ENCODE measurements at regions of chr22 and their contacts with region 1.

Region 1: DNA sequence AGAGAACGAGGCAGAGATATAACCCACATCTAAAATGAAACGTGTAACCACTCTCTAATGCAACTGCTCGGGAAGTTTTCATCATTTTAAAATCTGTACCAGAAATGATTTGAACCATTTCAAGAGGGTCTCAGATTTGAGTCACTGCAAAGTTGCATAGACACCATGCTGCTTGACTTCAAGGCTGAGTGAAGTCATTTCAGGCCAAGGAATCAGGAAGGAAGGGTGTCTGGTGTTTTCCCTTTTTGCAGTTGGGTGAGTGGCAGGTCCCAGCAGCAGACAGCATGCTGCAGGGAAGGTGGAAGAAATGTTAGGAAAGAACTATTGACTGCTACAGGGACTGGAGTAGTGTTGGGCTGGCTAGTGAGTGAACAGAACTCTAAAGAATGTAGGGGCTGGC is 16.5 kb downstream of the TANGO2 start:
- DNase-seq: peak; percentile 63
- H3K4me3 Mint-ChIP-seq: no peak overlapping the region
- H3K27ac Mint-ChIP-seq: peak overlapping the region; percentile 84
- H3K4me1 Mint-ChIP-seq: peaks cover 25% of the 10 kb centered on the region
- H3K27me3 Mint-ChIP-seq: no peaks in the 10 kb centered on the region

Region 2: DNA sequence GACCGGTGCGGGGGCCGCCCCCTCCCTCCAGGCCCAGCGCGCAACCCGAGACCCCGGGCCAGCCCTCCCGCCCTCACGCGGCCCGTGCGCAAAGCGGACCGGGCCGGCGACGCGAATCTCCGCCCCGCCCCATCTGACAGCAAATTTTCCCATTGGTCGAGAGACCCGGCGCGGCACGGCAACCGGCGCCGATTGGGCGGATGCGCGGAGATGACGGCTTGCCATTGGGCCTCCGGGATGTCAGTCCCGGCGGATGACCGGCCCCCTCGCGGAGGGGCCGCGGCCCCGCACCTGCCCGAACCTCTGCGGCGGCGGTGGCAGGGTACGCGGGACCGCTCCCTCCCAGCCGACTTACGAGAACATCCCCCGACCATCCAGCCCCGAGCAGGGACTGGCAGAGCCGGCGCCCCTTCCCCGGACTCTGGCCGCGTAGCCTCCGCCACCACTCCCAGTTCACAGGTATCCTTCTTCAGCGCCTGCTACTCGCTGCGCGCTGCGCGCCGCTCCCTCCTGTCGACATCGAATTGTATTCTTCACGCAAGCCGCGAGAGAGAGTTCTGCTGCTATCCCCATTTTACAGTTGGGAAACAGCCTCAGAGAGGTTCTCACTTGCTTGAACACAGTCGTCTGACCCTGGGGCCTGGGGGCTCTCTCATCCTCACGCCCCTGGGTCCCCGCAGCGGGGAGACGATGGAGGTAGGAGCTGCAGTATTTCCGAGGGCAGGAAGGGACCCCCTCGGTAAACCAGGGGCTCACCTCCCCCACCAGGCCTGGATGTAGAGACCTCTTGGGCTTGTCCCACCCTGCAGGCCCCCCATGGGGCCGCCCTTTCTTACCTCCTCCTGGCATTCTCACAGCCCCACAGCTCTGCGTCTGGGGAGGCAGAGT is 20.4 kb before region 1 on chr22 and contains the start of gene ARVCF:
- CTCF ChIA-PET with region 1: no interaction called
- intact Hi-C with region 1: loop called (anchors 1 kb)
- DNase-seq: peak; percentile 90
- H3K4me3 Mint-ChIP-seq: peak within 1 kb of the TSS; percentile 84
- H3K27ac Mint-ChIP-seq: no peak within 1 kb of the TSS
- H3K4me1 Mint-ChIP-seq: peaks cover 17% of the 10 kb centered on the region
- H3K27me3 Mint-ChIP-seq: peaks cover 11% of the 10 kb centered on the region
- total RNA-seq, gene ARVCF: 2.0 to 2.6 TPM

Region 3: GRCh38 chr22:20052309-20053259 is 15.2 kb after region 1 on chr22:
- CTCF ChIA-PET with region 1: no interaction called
- intact Hi-C with region 1: no loop called
- DNase-seq: no peak
- H3K4me3 Mint-ChIP-seq: no peak overlapping the region
- H3K27ac Mint-ChIP-seq: no peak overlapping the region
- H3K4me1 Mint-ChIP-seq: peaks cover 9% of the 10 kb centered on the region
- H3K27me3 Mint-ChIP-seq: no peaks in the 10 kb centered on the region